ENCODE measurements at regions of chr15 and their contacts with region 1.

Region 1: GRCh38 chr15:95684693-95685115 is 645.8 kb upstream of the NR2F2 start:
- DNase-seq: peak; percentile 97
- H3K4me3 ChIP-seq: no peak overlapping the region
- H3K27ac ChIP-seq: peak overlapping the region; percentile 66
- H3K4me1 ChIP-seq: peaks cover 22% of the 10 kb centered on the region
- H3K27me3 ChIP-seq: no peaks in the 10 kb centered on the region
- CTCF ChIP-seq: no peak
- POLR2A ChIP-seq: peak; percentile 66

Region 2: GRCh38 chr15:94582369-94582768 is 1102.3 kb before region 1 on chr15:
- CTCF ChIA-PET with region 1: no interaction called
- POLR2A ChIA-PET with region 1: no interaction called
- dilution Hi-C with region 1: no loop called
- intact Hi-C with region 1: loop called (anchors 10 kb)
- DNase-seq: peak; percentile 85
- H3K4me3 ChIP-seq: no peak overlapping the region
- H3K27ac ChIP-seq: no peak overlapping the region
- H3K4me1 ChIP-seq: peaks cover 25% of the 10 kb centered on the region
- H3K27me3 ChIP-seq: no peaks in the 10 kb centered on the region
- CTCF ChIP-seq: peak; percentile 75 to 80
- POLR2A ChIP-seq: no peak

Region 3: DNA sequence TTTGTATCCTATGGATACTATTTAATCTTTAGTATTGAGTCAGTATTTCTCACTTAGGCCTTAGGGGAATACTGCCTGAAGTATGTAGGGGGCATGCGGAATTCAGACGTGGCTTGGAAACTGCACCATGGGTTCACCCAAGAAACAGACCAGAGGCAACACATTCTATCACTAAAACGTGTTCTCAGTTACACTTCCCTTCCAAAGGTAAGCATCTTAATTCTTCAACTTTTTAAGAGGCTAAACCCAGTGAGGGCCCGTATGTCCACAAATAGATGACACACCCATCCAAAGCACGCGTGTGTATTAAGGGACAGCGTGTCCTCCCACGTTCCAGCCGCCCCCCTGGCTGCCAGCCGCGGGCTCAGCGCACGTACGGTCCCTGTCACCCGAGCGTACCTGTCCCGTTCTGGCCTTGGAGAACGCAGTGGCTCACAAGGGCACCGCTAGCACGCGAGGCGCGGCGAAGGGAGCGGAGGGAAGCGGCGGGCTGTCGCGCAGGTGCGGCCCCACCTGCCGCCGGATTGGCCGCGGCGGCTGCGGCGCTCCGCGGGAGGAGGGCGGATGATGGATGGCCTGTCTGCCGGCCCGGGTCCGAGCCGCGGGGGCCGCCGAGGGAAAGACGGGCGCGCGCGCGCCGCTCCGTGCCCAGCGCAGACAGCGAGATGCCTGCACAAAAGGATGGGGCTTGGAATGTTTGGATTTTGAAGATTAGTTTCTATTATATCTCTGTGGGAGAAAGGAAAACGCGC is 358.1 kb before region 1 on chr15:
- CTCF ChIA-PET with region 1: no interaction called
- POLR2A ChIA-PET with region 1: no interaction called
- dilution Hi-C with region 1: no loop called
- intact Hi-C with region 1: loop called (anchors 2 kb)
- DNase-seq: peak; percentile 75
- H3K4me3 ChIP-seq: peak overlapping the region; percentile 64 to 81 (median 65)
- H3K27ac ChIP-seq: peak overlapping the region; percentile 98
- H3K4me1 ChIP-seq: peaks cover 63% of the 10 kb centered on the region
- H3K27me3 ChIP-seq: no peaks in the 10 kb centered on the region
- CTCF ChIP-seq: peak in 1 of 2 donors; percentile 0
- POLR2A ChIP-seq: no peak

Region 4: DNA sequence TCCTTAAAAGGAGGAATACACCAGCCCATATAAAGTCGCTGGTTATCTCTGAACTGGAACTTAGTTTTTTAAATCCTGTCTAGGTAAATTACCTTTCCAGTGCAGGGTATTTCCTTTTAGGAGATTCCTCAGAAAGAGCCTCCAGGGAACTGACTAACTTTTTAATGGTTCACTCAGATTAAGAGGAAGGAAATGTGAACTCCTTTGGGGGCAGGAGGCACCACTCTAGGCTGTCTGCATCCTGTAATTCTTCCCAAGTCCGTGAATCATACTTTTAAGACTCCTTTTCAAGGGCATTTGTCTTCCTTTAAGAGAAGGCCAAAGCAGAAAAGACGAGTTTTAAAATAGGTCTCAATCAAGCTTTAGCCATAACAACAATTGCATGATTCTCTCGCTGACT is 225.4 kb before region 1 on chr15:
- CTCF ChIA-PET with region 1: no interaction called
- POLR2A ChIA-PET with region 1: no interaction called
- dilution Hi-C with region 1: no loop called
- intact Hi-C with region 1: loop called (anchors 2 kb)
- DNase-seq: peak; percentile 90
- H3K4me3 ChIP-seq: peak overlapping the region in 1 of 3 experiments; percentile 51
- H3K27ac ChIP-seq: peak overlapping the region; percentile 85
- H3K4me1 ChIP-seq: peaks cover 41% of the 10 kb centered on the region
- H3K27me3 ChIP-seq: no peaks in the 10 kb centered on the region
- CTCF ChIP-seq: no peak
- POLR2A ChIP-seq: peak; percentile 65

Region 5: GRCh38 chr15:95604634-95605036 is 80.1 kb before region 1 on chr15:
- CTCF ChIA-PET with region 1: no interaction called
- POLR2A ChIA-PET with region 1: no interaction called
- dilution Hi-C with region 1: no loop called
- intact Hi-C with region 1: loop called (anchors 5 kb)
- DNase-seq: peak; percentile 95
- H3K4me3 ChIP-seq: no peak overlapping the region
- H3K27ac ChIP-seq: peak overlapping the region; percentile 50
- H3K4me1 ChIP-seq: peaks cover 33% of the 10 kb centered on the region
- H3K27me3 ChIP-seq: no peaks in the 10 kb centered on the region
- CTCF ChIP-seq: no peak
- POLR2A ChIP-seq: no peak

Region 6: GRCh38 chr15:96031426-96032110 is 346.9 kb after region 1 on chr15:
- CTCF ChIA-PET with region 1: no interaction called
- POLR2A ChIA-PET with region 1: no interaction called
- dilution Hi-C with region 1: no loop called
- intact Hi-C with region 1: loop called (anchors 1 kb)
- DNase-seq: no peak
- H3K4me3 ChIP-seq: no peak overlapping the region
- H3K27ac ChIP-seq: no peak overlapping the region
- H3K4me1 ChIP-seq: no peaks in the 10 kb centered on the region
- H3K27me3 ChIP-seq: no peaks in the 10 kb centered on the region
- CTCF ChIP-seq: no peak
- POLR2A ChIP-seq: no peak

Region 7: DNA sequence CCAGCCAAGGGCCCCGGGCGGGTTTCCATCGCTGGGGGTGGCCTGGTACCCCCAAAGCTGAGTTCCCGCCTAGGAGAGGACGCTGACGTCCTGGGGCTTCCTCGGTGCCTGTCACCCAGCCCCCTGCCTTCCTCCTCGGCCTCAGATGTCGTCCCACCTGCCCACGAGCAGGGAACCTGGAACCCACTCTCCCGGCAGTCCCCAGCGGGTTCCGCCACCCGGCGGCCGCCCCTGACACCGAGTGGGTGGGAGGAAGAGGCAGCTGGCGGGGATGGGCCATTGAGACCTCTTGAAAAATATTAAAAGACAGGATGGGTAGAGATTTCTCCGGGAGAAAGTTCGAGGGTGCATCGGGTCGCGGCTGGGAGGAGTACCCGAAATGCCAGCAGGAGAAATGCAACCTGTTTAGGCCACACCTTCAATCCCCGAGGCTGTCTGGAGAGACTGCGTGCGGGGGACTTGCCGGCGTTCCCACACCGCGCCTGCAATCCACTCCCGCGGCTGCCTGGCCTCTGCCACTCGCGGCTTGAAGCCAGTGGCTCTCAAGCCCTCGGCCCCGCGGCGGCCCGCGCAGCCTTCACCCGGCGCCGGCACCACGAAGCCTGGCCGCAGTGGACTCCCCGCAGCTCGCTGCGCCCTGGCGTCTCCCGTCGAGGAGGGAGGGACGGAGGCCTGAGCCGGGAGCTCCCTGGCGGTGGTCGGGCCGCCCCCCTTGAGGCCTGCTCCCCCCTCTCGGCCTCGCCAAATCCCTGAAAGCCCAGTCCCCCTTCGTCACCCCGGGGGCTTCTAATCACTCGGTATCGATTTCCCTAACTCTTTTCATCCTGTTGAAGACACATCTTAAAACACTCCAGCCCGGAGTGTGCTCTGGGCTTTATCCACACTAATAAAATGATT is 637.2 kb after region 1 on chr15:
- CTCF ChIA-PET with region 1: no interaction called
- POLR2A ChIA-PET with region 1: no interaction called
- dilution Hi-C with region 1: no loop called
- intact Hi-C with region 1: loop called (anchors 1 kb)
- DNase-seq: peak; percentile 67
- H3K4me3 ChIP-seq: peak overlapping the region; percentile 18 to 89 (median 29)
- H3K27ac ChIP-seq: peak overlapping the region; percentile 85
- H3K4me1 ChIP-seq: peaks cover 74% of the 10 kb centered on the region
- H3K27me3 ChIP-seq: no peaks in the 10 kb centered on the region
- CTCF ChIP-seq: peak; percentile 7 to 27
- POLR2A ChIP-seq: no peak